ENCODE measurements at regions of chr2 and their contacts with region 1.

Region 1: GRCh38 chr2:98012561-98012991 is 16.8 kb upstream of the TMEM131 start:
- DNase-seq: no peak
- H3K4me3 Mint-ChIP-seq: no peak overlapping the region
- H3K27ac Mint-ChIP-seq: peak overlapping the region; percentile 78
- H3K4me1 Mint-ChIP-seq: peaks cover 34% of the 10 kb centered on the region
- H3K27me3 Mint-ChIP-seq: no peaks in the 10 kb centered on the region

Region 2: GRCh38 chr2:97806738-97807618 is 205.6 kb before region 1 on chr2:
- intact Hi-C with region 1: loop called (anchors 5 kb)
- DNase-seq: peak; percentile 57
- H3K4me3 Mint-ChIP-seq: no peak overlapping the region
- H3K27ac Mint-ChIP-seq: no peak overlapping the region
- H3K4me1 Mint-ChIP-seq: no peaks in the 10 kb centered on the region
- H3K27me3 Mint-ChIP-seq: no peaks in the 10 kb centered on the region

Region 3: GRCh38 chr2:97870396-97870843 is 142.2 kb before region 1 on chr2:
- intact Hi-C with region 1: loop called (anchors 1 kb)
- DNase-seq: peak; percentile 62
- H3K4me3 Mint-ChIP-seq: peak overlapping the region; percentile 1
- H3K27ac Mint-ChIP-seq: peak overlapping the region; percentile 60
- H3K4me1 Mint-ChIP-seq: peaks cover 35% of the 10 kb centered on the region
- H3K27me3 Mint-ChIP-seq: no peaks in the 10 kb centered on the region

Region 4: DNA sequence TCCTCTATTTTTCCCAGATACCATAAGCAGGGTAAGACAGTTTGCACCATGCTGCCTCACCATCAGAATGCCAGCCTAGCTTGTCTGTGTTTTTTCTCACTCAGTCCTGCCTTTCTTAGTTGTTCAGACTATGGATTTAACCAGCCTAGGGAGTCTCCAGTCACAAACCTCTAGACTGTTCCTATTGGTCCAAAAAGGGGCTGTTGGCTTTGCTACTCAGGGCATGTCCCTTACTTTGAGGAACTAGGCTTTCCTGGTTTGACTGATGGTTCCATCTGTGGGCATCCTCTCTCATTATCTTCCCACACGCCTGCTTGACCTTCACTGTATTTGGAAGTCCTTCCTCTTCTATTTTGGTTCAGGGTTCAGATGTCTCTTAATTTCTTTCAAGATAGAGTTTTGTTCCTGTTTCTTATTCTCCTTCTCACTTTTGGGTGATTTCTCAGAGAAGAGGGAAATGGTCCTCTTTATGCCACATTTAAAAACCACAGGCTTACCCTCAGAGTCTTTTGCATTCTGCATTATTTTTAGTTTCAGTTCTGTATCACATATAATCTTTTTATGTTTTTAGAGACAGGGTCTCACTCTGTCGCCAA is 14.4 kb after region 1 on chr2:
- intact Hi-C with region 1: loop called (anchors 1 kb)
- DNase-seq: no peak
- H3K4me3 Mint-ChIP-seq: peak overlapping the region; percentile 31
- H3K27ac Mint-ChIP-seq: peak overlapping the region; percentile 42
- H3K4me1 Mint-ChIP-seq: peaks cover 25% of the 10 kb centered on the region
- H3K27me3 Mint-ChIP-seq: peaks cover 2% of the 10 kb centered on the region

Region 5: GRCh38 chr2:98134172-98135005 is 121.8 kb after region 1 on chr2:
- intact Hi-C with region 1: loop called (anchors 1 kb)
- DNase-seq: peak; percentile 36
- H3K4me3 Mint-ChIP-seq: peak overlapping the region; percentile 13
- H3K27ac Mint-ChIP-seq: peak overlapping the region; percentile 52
- H3K4me1 Mint-ChIP-seq: peaks cover 19% of the 10 kb centered on the region
- H3K27me3 Mint-ChIP-seq: peaks cover 9% of the 10 kb centered on the region

Region 6: GRCh38 chr2:98253461-98254070 is 241.0 kb after region 1 on chr2:
- intact Hi-C with region 1: no loop called
- DNase-seq: no peak
- H3K4me3 Mint-ChIP-seq: no peak overlapping the region
- H3K27ac Mint-ChIP-seq: no peak overlapping the region
- H3K4me1 Mint-ChIP-seq: no peaks in the 10 kb centered on the region
- H3K27me3 Mint-ChIP-seq: peaks cover 10% of the 10 kb centered on the region

Measured in activated T-helper 1 cell treated with anti-CD3 and anti-CD28 coated beads, Interleukin-12 subunit alpha, Interleukin-12 subunit beta, Interleukin-2, Interleukin-4 antibody, amounts not matched to agents 30 ng/mL and 10 ng/mL and 1 ng/mL, durations not matched to agents 14 hours and 24 hours and 36 hours (primary cell).